ENCODE measurements at regions of chr6 and their contacts with region 1.

Region 1: GRCh38 chr6:126657561-126658175 is 317.8 kb downstream of the CENPW start:
- DNase-seq: no peak
- ATAC-seq: no peak
- H3K4me3 ChIP-seq: no peak overlapping the region
- H3K27ac ChIP-seq: no peak overlapping the region
- H3K4me1 ChIP-seq: no peaks in the 10 kb centered on the region
- H3K27me3 ChIP-seq: no peaks in the 10 kb centered on the region
- CTCF ChIP-seq: no peak

Region 2: GRCh38 chr6:126976253-126976797 is 318.7 kb after region 1 on chr6:
- intact Hi-C with region 1: no loop called
- DNase-seq: no peak
- ATAC-seq: peak in 1 of 4 donors; percentile 33
- H3K4me3 ChIP-seq: no peak overlapping the region
- H3K27ac ChIP-seq: no peak overlapping the region
- H3K4me1 ChIP-seq: no peaks in the 10 kb centered on the region
- H3K27me3 ChIP-seq: no peaks in the 10 kb centered on the region
- CTCF ChIP-seq: no peak

Region 3: GRCh38 chr6:127069659-127070279 is 412.1 kb after region 1 on chr6:
- intact Hi-C with region 1: loop called in 1 of 2 experiments (anchors 10 kb)
- DNase-seq: no peak
- ATAC-seq: peak; percentile 49 to 77 (median 55)
- H3K4me3 ChIP-seq: no peak overlapping the region
- H3K27ac ChIP-seq: no peak overlapping the region
- H3K4me1 ChIP-seq: peaks cover 4% of the 10 kb centered on the region
- H3K27me3 ChIP-seq: no peaks in the 10 kb centered on the region
- CTCF ChIP-seq: peak; percentile 50

Measured in psoas muscle (tissue), 8 donors.